Adrenal gland (tissue), 19 donors: ENCODE measurements at regions of chr9 and their contacts with region 1.

Region 1: GRCh38 chr9:17116400-17116837 is 18.4 kb upstream of the CNTLN start:
- DNase-seq: no peak
- H3K4me3 ChIP-seq: no peak overlapping the region
- H3K27ac ChIP-seq: no peak overlapping the region
- H3K4me1 ChIP-seq: no peaks in the 10 kb centered on the region
- H3K27me3 ChIP-seq: no peaks in the 10 kb centered on the region
- CTCF ChIP-seq: peak; percentile 29 to 64 (median 55)
- POLR2A ChIP-seq: no peak

Region 2: GRCh38 chr9:16964228-16964627 is 152.2 kb before region 1 on chr9:
- intact Hi-C with region 1: no loop called
- DNase-seq: no peak
- H3K4me3 ChIP-seq: no peak overlapping the region
- H3K27ac ChIP-seq: no peak overlapping the region
- H3K4me1 ChIP-seq: no peaks in the 10 kb centered on the region
- H3K27me3 ChIP-seq: no peaks in the 10 kb centered on the region
- CTCF ChIP-seq: no peak
- POLR2A ChIP-seq: no peak

Region 3: DNA sequence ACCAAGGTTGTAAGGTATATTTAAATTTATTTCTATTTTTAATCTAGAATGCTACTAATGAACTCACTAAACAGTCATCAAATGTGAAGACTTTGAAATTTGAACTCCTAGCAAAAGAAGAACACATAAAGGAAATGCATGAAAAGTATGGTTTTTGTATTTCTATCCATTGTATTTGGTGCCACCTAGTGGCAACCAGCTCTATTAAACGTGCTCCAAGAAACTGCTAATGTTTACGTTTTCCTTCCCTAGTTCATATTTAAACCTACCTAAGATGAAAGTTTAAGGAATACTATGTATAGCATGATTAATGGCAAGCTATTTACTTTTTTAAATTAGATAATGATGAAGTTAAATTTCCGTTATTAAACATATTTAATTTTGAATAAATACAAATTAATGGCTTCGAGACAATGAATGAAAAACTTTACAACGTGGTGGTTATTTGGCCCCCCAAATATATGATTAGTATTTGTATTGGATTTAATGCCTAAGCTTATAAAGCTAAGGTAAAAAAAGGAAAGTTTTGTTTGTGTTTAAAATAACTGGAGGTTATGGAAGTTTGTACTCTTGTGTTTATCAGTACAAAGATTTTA is 346.5 kb after region 1 on chr9:
- intact Hi-C with region 1: loop called in 1 of 2 experiments (anchors 5 kb)
- DNase-seq: peak; percentile 16 to 63 (median 33)
- H3K4me3 ChIP-seq: no peak overlapping the region
- H3K27ac ChIP-seq: no peak overlapping the region
- H3K4me1 ChIP-seq: no peaks in the 10 kb centered on the region
- H3K27me3 ChIP-seq: no peaks in the 10 kb centered on the region
- CTCF ChIP-seq: peak; percentile 61 to 86 (median 70)
- POLR2A ChIP-seq: no peak